Activated CD8-positive, alpha-beta memory T cell treated with anti-CD3 and anti-CD28 coated beads, Interleukin-2, amount 10 ng/mL, durations not matched to agents 7 days and 5 days (primary cell): ENCODE measurements at regions of chr17 and their contacts with region 1.

Region 1: DNA sequence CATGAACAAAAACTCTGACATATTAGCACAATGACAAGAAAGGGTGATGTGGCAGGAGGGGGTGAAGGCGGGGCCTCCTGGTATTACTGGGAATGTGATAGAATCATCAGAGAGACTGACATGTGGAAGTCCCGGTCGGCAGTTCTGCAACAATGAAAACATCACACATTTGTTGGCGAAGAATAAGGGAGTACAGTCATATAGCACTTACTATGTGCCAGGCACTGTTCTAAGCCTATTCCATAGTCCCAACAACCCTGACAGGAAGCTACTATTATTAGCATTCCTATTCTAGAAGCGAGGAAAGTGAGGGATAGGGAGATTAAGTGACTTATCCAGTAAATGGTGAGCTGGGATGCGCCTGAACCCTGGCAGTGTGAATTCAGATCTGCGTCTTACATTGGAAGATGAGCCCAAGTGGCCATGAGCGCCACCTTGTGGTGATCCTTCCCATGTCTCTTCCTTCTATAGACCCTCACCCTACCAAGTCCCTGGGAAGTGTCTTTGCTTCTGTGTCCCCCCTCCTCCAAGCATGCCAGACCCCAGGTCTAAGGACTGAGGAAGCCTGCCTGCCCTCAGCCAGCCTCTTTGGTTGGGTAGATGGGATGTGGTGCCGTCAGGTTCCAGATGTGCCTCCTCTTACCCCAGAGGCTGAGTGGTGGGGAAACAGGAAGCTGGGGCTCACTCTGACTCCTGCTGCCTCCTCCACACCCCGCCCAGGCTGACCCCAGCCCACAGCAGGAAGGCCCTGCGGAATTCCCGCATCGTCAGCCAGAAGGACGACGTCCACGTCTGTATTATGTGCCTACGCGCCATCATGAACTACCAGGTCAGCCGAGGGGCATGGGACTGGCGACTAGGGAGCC is 14.0 kb downstream of the FMNL1 start:
- DNase-seq: peak; percentile 82
- ATAC-seq: peak; percentile 60
- H3K4me3 Mint-ChIP-seq: no peak overlapping the region
- H3K27ac Mint-ChIP-seq: peak overlapping the region; percentile 69
- H3K4me1 Mint-ChIP-seq: peaks cover 58% of the 10 kb centered on the region
- H3K27me3 Mint-ChIP-seq: no peaks in the 10 kb centered on the region

Region 2: GRCh38 chr17:45247429-45248131 is 11.9 kb after region 1 on chr17:
- CTCF ChIA-PET with region 1: interaction called, 32 read pairs
- DNase-seq: peak; percentile 100
- ATAC-seq: peak; percentile 91
- H3K4me3 Mint-ChIP-seq: peak overlapping the region; percentile 82
- H3K27ac Mint-ChIP-seq: peak overlapping the region; percentile 96
- H3K4me1 Mint-ChIP-seq: peaks cover 60% of the 10 kb centered on the region
- H3K27me3 Mint-ChIP-seq: no peaks in the 10 kb centered on the region

Region 3: GRCh38 chr17:45376171-45377005 is 140.7 kb after region 1 on chr17:
- CTCF ChIA-PET with region 1: no interaction called
- DNase-seq: no peak
- ATAC-seq: no peak
- H3K4me3 Mint-ChIP-seq: no peak overlapping the region
- H3K27ac Mint-ChIP-seq: no peak overlapping the region
- H3K4me1 Mint-ChIP-seq: peaks cover 12% of the 10 kb centered on the region
- H3K27me3 Mint-ChIP-seq: peaks cover 11% of the 10 kb centered on the region